Pancreas (tissue), 10 donors: ENCODE measurements at regions of chrX and their contacts with region 1.

Region 1: DNA sequence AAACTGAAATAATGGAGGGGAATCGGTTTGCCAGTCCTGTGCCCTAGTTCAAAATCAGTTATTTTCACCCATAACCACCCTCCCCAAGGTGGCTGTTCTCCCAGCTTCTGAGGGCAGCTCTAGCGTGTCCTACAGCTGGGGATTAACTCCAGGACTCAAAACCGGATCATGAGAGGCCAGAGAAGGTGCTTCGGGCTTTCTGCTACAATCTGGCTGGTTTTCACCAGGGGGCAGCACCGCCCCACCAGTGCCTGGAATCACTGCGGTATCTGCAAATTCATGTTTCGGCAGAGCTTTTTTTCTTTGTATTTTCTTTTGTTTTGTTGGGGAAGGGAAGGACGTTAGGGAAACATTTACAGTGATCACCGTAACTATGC is 28.4 kb downstream of the PDHA1 start:
- DNase-seq: peak in 5 of 6 donors; percentile 45 to 75 (median 62)
- ATAC-seq: peak; percentile 85 to 96 (median 92)
- H3K4me3 ChIP-seq: peak overlapping the region in 2 of 4 donors; percentile 11 to 32
- H3K27ac ChIP-seq: no peak overlapping the region
- H3K4me1 ChIP-seq: no peaks in the 10 kb centered on the region
- H3K27me3 ChIP-seq: no peaks in the 10 kb centered on the region
- CTCF ChIP-seq: peak; percentile 26 to 55 (median 48)

Region 2: DNA sequence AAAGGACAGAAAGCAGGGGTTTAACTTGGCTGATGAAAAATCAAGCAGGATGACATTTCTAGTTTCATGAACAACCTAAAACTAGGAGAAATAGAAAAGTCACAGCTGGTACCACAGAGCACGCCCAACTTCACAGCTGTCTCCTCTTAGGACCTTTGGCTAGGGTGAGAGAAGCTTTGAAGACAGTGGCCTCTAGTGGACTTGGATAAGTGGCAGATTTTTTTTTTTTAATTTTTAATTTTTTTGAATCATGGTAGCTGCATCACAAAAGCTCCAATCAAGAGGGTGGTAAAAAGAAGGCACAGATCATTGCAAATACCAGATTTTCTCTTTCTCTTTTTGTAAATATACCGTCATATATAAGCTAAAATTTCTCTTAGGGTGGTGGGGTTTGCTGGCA is 163.3 kb after region 1 on chrX:
- intact Hi-C with region 1: loop called in 2 of 3 experiments (anchors 5 to 10 kb)
- DNase-seq: no peak
- ATAC-seq: peak in 3 of 4 donors; percentile 56 to 80 (median 78)
- H3K4me3 ChIP-seq: no peak overlapping the region
- H3K27ac ChIP-seq: no peak overlapping the region
- H3K4me1 ChIP-seq: no peaks in the 10 kb centered on the region
- H3K27me3 ChIP-seq: peaks cover 0 to 4% (median 0%) of the 10 kb centered on the region in 4 donors
- CTCF ChIP-seq: peak in 3 of 4 donors; percentile 19 to 24 (median 20)

Region 3: DNA sequence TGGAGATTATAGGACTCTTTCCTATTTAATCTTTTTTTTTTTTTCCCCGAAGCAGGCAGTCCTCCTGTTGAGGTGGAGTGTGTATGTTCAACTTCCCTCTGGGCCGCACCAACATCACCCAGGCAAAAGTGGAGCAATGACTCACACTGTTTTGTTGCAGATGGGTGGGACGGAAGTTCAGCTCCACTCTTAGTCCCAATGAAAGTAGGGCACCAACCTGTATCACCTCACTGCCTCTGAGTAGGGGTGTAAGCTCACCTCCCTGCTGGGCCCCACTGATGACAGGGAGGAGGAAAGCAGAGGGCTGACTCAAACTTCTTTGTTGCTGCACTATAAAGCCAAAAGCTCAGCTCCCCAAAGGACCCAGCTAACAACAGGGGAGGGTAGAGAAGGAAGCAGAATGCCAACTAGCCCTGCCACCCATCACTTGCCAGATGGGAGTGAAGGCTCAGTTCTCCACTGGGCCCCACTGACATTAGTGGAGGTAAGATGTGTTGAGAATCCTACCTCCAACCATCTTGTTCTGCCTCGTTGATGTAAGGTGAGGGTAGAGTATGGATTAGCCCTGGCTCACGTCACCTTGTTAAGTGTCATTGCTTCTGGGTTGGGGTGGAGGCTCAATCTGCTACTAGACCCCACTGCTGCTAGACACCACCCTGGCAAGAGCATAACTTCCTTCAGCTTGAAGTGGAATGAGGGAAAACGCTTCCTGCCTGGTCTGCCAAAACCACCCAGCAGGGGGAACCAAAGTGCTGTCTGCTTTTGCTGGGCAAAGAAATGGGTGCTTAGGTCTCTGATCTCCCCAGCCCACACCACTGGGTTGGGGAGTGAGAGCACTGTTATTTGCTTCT is 880.4 kb after region 1 on chrX:
- intact Hi-C with region 1: no loop called
- DNase-seq: peak; percentile 26 to 83 (median 56)
- ATAC-seq: peak; percentile 75 to 96 (median 92)
- H3K4me3 ChIP-seq: no peak overlapping the region
- H3K27ac ChIP-seq: no peak overlapping the region
- H3K4me1 ChIP-seq: no peaks in the 10 kb centered on the region
- H3K27me3 ChIP-seq: no peaks in the 10 kb centered on the region
- CTCF ChIP-seq: peak; percentile 39 to 56 (median 42)